ENCODE measurements at regions of chr19 and their contacts with region 1.

Region 1: GRCh38 chr19:43595999-43596841 is at the starts of genes IRGQ and ZNF576:
- DNase-seq: peak; percentile 100
- ATAC-seq: peak; percentile 83
- H3K4me3 Mint-ChIP-seq: peak within 1 kb of the TSS; percentile 87
- H3K27ac Mint-ChIP-seq: peak within 1 kb of the TSS; percentile 95
- H3K4me1 Mint-ChIP-seq: peaks cover 26% of the 10 kb centered on the region
- H3K27me3 Mint-ChIP-seq: no peaks in the 10 kb centered on the region
- total RNA-seq, gene IRGQ: 11.1 to 16.4 TPM
- total RNA-seq, gene ZNF576: 11.6 to 14.3 TPM

Region 2: GRCh38 chr19:43446746-43447489 is 149.3 kb before region 1 on chr19:
- CTCF ChIA-PET with region 1: interaction called, 24 read pairs
- POLR2A ChIA-PET with region 1: interaction called, 3 read pairs
- intact Hi-C with region 1: loop called (anchors 1 to 2 kb)
- DNase-seq: peak; percentile 90
- ATAC-seq: peak; percentile 81
- H3K4me3 Mint-ChIP-seq: no peak overlapping the region
- H3K27ac Mint-ChIP-seq: no peak overlapping the region
- H3K4me1 Mint-ChIP-seq: peaks cover 27% of the 10 kb centered on the region
- H3K27me3 Mint-ChIP-seq: no peaks in the 10 kb centered on the region

Region 3: DNA sequence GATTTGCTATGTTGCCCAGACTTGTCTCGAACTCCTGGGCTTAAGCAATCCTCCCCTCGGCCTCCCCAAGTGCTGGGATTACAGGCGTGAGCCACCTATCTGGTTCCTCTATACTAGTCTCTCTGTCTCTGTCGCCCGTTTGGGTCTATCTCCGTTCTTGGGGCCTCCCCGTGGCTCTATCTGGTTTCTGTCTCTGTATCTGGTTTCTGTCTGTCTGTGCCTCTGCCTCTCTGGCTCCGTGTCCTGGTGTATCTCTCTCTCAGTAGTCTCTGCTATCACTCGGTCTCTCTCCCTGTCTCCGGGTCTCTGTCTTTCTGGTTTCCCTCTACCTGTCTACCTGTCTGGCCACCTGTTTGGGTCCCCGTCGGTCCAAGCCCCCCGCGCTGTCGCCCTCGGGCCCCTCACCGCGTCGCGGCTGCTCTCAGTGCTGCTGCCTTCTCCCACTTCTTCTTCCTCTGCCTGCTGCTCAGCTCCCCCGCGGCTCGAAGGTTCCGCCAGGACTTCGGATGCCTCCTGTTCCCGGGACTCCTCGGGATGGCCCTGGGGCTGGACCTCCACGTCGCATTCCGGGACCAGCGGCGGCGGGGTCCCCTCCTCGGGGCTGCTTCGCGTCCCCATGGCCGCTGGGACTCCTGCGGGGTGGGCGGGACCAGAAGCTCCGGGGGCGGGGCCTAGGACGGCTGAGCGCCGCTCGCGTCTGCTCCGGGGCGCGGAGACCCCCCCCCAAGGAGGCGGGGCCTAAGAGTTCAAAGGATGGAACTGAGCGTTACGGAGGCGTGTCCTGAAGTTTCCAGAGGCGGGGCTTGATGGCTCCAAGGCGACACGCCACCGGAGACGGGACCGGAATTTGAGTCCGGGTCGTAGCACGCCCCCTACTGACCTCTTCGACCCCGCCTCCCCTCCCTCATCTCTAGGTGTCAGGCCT is 92.5 kb before region 1 on chr19:
- CTCF ChIA-PET with region 1: interaction called, 10 read pairs
- POLR2A ChIA-PET with region 1: no interaction called
- intact Hi-C with region 1: loop called in 1 of 2 experiments (anchors 1 kb)
- DNase-seq: peak; percentile 100
- ATAC-seq: peak; percentile 96
- H3K4me3 Mint-ChIP-seq: peak overlapping the region; percentile 96
- H3K27ac Mint-ChIP-seq: peak overlapping the region; percentile 94
- H3K4me1 Mint-ChIP-seq: peaks cover 32% of the 10 kb centered on the region
- H3K27me3 Mint-ChIP-seq: no peaks in the 10 kb centered on the region

Region 4: DNA sequence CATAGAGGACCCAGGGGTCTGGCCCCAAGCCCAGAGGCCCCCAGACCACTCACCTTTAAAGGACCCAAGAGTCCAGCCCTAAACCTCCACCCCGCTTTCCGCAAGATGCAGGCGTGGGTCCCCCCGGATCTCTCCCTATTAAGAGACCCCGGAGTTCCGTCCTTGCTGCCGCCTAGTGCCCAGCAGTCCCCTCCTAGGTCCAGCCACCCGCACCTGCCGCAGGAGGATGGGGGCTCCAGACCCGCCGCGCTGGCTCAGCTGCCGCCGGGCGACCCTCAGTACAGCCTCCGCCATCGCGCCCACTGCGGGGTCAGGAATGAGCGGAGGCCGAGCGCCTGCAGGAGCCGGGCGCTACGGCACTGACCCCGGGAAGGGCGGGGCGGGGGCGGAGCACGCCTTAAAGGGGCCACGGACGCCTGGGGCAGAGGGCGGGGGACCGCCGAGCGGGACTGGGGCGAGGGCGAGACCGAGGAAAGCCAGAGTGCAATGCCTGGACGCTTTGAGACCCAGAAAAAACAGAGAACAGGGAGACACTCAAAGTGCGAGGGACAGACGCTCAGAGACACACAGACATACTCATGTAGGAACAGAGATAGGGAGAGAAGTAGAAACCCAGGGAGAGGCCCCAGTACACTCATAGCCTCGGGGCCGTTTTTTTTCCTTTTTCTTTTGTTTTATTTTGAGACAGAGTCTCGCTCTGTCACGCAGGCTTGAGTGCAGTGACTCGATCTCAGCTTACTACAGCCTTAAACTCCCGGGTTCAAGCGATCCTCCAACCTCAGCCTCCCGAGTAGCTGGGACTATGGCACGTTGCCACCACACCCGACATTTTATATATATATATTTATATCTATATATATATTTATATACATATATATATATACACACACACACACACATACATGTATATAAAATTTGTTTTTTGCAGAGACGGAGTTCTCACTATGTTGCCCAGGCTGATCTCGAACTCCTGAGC is 69.0 kb before region 1 on chr19 and contains the start of gene ETHE1:
- CTCF ChIA-PET with region 1: interaction called, 30 read pairs
- POLR2A ChIA-PET with region 1: interaction called, 5 read pairs
- intact Hi-C with region 1: loop called (anchors 1 kb)
- DNase-seq: peak; percentile 87
- ATAC-seq: peak; percentile 70
- H3K4me3 Mint-ChIP-seq: peak within 1 kb of the TSS; percentile 92
- H3K27ac Mint-ChIP-seq: peak within 1 kb of the TSS; percentile 94
- H3K4me1 Mint-ChIP-seq: peaks cover 22% of the 10 kb centered on the region
- H3K27me3 Mint-ChIP-seq: no peaks in the 10 kb centered on the region
- total RNA-seq, gene ETHE1: 68.7 to 78.8 TPM

Region 5: DNA sequence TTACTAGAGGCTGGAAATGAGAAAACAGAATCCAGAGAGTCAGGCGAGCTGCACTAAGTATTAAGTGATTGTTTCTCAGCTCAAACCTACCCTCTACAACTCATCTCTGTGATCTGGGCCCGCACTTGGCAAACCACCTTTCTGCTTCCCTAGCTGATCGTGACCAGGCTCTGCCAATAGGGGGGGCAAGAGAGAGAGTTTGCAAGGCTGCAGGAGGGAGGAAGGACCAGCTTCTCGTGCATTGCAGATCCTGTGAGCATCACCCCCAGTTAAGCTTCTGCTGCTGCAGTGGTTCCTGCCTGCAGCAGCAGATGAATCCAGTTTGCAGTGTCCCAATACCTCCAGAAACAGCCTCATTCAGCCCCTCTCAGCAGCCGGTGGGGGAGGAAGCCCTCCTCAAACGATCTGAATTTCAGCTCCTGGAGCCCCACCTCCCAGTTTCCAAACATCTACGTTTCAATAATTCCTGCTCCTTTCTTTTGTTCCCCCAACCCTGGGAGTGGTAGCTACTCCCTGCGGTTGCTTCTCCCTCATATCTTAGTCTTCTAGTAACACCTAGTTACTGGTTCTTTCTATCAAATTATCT is 40.9 kb before region 1 on chr19:
- CTCF ChIA-PET with region 1: interaction called, 88 read pairs
- POLR2A ChIA-PET with region 1: interaction called, 9 read pairs
- intact Hi-C with region 1: loop called (anchors 1 kb)
- DNase-seq: peak; percentile 90
- ATAC-seq: peak; percentile 98
- H3K4me3 Mint-ChIP-seq: no peak overlapping the region
- H3K27ac Mint-ChIP-seq: peak overlapping the region; percentile 13
- H3K4me1 Mint-ChIP-seq: peaks cover 14% of the 10 kb centered on the region
- H3K27me3 Mint-ChIP-seq: no peaks in the 10 kb centered on the region

Region 6: DNA sequence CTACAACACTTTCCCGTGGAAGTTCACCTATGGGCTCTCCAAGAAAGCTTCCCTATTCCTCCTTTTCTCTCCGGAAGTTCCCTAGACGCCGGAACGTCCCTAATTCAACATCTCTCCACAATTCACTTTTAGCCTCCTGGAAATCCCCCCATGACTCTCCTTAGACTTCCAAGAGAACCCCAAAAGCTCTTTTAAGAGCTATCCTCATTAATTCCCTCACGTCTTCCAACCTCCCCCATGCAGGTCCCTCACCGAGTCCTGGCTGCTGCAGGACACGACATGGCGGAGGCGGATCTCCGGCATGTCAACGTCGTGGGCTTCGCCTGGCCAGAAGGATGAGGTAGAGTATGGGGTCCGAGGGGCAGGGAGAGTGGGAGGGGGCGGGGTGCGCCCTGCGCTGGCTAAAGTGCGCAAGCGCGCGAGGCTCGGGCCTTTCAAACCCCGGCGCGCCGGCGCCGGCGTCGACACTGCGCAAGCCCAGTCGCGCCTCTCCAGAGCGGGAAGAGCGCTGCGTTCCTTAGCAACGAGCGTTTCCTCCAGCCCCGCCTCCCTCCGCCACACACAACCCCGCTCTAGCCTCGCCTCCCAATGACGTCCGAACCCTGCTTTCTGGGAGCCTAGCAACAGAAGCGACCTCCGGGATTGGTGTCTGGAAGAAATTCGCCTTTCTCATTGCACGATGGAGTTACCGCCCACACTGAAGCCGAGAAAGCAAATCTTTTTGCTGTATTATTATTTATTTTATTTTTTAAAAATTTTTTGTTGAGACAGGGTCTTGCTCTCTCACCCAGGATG is 20.9 kb before region 1 on chr19 and contains the starts of genes PINLYP and XRCC1:
- CTCF ChIA-PET with region 1: interaction called, 27 read pairs
- POLR2A ChIA-PET with region 1: interaction called, 9 read pairs
- intact Hi-C with region 1: loop called (anchors 1 kb)
- DNase-seq: peak; percentile 99
- ATAC-seq: peak; percentile 99
- H3K4me3 Mint-ChIP-seq: peak within 1 kb of the TSS; percentile 87
- H3K27ac Mint-ChIP-seq: peak within 1 kb of the TSS; percentile 94
- H3K4me1 Mint-ChIP-seq: peaks cover 41% of the 10 kb centered on the region
- H3K27me3 Mint-ChIP-seq: no peaks in the 10 kb centered on the region
- total RNA-seq, gene PINLYP: 3.5 to 3.6 TPM
- total RNA-seq, gene XRCC1: 31.6 to 40.0 TPM

Region 7: GRCh38 chr19:43619262-43620060 is 23.2 kb after region 1 on chr19 and contains the start of gene ZNF428:
- CTCF ChIA-PET with region 1: interaction called, 5 read pairs
- POLR2A ChIA-PET with region 1: no interaction called
- intact Hi-C with region 1: loop called (anchors 1 kb)
- DNase-seq: peak; percentile 94
- ATAC-seq: peak; percentile 92
- H3K4me3 Mint-ChIP-seq: peak within 1 kb of the TSS; percentile 94
- H3K27ac Mint-ChIP-seq: peak within 1 kb of the TSS; percentile 99
- H3K4me1 Mint-ChIP-seq: peaks cover 17% of the 10 kb centered on the region
- H3K27me3 Mint-ChIP-seq: no peaks in the 10 kb centered on the region
- total RNA-seq, gene ZNF428: 9.0 to 10.1 TPM

Measured in activated CD4-positive, alpha-beta T cell treated with anti-CD3 and anti-CD28 coated beads for 36 hours (primary cell).